ENCODE measurements at regions of chr12 and their contacts with region 1.

Region 1: DNA sequence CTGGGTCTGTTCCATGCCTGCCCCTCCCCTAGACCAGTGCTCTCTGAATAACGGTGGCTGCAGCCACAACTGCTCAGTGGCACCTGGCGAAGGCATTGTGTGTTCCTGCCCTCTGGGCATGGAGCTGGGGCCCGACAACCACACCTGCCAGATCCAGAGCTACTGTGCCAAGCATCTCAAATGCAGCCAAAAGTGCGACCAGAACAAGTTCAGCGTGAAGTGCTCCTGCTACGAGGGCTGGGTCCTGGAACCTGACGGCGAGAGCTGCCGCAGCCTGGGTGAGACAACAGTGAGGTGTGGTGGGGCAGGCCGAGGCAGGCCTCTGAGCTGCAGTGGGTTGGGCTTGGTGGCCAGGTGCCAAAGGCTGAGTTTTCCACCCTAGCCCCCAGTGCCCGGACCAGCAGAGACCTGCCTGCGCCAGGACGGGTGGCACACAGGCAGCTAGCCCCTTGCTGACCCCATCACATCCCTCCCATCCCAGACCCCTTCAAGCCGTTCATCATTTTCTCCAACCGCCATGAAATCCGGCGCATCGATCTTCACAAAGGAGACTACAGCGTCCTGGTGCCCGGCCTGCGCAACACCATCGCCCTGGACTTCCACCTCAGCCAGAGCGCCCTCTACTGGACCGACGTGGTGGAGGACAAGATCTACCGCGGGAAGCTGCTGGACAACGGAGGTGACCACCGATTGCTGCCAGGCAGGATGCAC is 28.2 kb upstream of the LRP1-AS start:
- DNase-seq: peak; percentile 94
- ATAC-seq: peak; percentile 72

Region 2: DNA sequence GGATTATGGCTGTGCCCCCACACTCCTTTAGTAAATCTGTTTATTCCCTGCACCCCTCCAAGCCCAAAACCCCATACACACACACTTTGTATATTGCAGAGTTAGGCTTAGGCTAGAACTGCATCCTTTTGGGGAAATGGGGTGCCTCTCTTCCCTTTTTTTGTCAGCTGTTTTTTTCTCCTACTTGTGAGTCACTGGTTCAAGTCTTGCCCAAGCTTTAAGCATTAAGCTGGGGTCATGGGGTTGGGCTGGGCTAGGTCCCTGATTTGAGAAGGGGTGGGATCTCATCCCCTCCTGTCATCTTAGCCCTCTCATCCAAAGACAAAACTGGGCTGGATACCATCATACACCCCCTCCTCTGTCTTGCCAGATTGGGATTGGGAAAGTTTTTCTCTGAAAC is 45.7 kb before region 1 on chr12:
- intact Hi-C with region 1: loop called (anchors 5 kb)
- DNase-seq: no peak
- ATAC-seq: no peak

Region 3: DNA sequence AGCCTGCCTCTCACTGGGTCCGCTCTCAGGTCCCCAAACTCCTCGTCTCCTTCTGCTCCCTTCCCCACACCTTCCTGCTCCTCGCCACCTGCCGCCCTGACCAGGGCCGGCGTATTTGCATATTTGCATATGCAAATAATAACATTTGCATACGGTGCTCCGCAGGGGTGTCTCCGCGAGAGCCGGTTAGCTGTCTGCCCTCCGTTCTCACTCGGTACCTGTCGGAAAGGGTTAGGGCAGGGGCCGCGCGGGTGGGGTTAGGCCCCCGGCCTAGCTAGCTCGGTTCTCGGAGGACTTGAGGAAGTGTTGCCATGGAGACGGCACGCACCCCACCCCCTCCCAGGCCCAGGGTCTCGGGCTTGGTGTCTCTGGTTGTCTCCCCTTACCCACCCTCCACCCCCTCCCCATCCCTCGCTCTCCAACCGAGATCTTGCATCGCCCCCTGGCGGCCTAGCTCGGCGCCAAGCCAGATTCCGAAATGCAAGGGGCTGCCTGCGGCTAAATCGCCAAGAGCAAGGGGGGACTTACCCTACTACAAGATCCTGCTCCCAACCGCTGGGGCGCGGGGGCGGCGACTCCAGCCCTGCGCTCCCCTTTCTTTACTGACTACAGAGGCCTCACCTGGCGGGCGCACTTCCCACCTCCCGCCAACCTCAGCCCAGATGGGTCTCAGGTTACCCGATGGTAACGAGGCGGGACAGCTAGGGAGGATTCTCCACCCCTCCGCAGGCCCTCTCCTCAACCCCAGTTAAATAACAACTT is 67.3 kb after region 1 on chr12:
- intact Hi-C with region 1: no loop called
- DNase-seq: peak; percentile 78
- ATAC-seq: no peak

Region 4: GRCh38 chr12:57552835-57553313 is 377.3 kb after region 1 on chr12:
- intact Hi-C with region 1: no loop called
- DNase-seq: no peak
- ATAC-seq: no peak

Region 5: GRCh38 chr12:57603324-57603723 is 427.7 kb after region 1 on chr12:
- intact Hi-C with region 1: no loop called
- DNase-seq: no peak
- ATAC-seq: peak; percentile 6

Measured in sciatic nerve (tissue), 2 donors.